GM23248 (cell line): ENCODE measurements at regions of chr18 and their contacts with region 1.

Region 1: DNA sequence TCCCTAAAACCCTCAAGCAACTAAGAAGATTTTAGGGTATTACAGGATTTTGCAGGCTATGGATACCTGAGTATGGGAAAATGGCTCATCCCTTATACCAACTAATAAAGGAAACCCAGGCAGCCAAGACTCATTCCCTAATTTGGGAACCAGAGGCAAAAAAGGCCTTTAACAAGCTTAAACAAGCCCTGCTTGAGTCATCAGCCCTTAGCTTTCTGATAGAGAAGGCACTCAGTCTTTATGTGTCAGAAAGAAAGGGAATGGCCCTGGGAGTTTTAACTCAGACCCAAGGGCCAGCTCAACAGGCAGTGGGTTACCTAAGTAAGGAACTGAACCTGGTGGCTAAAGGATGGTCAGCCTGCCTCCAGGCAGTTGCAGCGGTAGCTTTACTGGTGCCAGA is 96.9 kb upstream of the RMP24 start:
- DNase-seq: no peak
- H3K4me3 ChIP-seq: no peak overlapping the region
- H3K27ac ChIP-seq: no peak overlapping the region
- H3K4me1 ChIP-seq: no peaks in the 10 kb centered on the region
- H3K27me3 ChIP-seq: no peaks in the 10 kb centered on the region

Region 2: GRCh38 chr18:35775887-35776286 is 99.7 kb before region 1 on chr18:
- in situ Hi-C with region 1: loop called (anchors 25 kb)
- DNase-seq: peak; percentile 38
- H3K4me3 ChIP-seq: no peak overlapping the region
- H3K27ac ChIP-seq: no peak overlapping the region
- H3K4me1 ChIP-seq: no peaks in the 10 kb centered on the region
- H3K27me3 ChIP-seq: no peaks in the 10 kb centered on the region